Colonic mucosa (tissue), 4 donors: ENCODE measurements at regions of chr9 and their contacts with region 1.

Region 1: DNA sequence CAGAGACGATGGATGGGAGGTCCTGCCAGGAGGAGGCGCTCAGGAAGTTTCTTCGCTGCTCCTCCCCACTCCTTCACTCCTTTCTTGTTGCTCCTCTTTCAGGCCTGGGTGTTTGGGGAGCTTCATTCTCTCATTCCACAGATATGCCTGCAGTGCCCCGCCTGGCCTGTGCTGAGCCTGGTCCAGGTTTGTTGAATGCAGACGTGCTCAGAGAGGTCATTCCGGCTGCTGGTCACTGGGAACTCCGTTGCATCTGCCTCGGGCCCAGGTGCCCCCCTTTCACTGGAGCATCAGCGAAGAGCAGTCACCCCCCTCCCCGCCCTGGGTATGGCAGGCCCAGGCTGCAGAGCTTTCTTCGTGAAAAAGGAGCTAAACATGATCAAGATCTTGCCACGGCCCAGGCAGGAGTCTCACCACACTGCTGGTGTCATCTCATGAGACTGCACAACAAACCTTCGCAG is 15.5 kb downstream of the SURF6 start:
- DNase-seq: no peak
- H3K4me3 ChIP-seq: no peak overlapping the region
- H3K27ac ChIP-seq: no peak overlapping the region
- H3K4me1 ChIP-seq: no peaks in the 10 kb centered on the region
- H3K27me3 ChIP-seq: no peaks in the 10 kb centered on the region
- CTCF ChIP-seq: no peak

Region 2: GRCh38 chr9:133238851-133239532 is 81.5 kb before region 1 on chr9:
- intact Hi-C with region 1: loop called (anchors 10 kb)
- DNase-seq: peak; percentile 88
- H3K4me3 ChIP-seq: peak overlapping the region; percentile 22
- H3K27ac ChIP-seq: peak overlapping the region; percentile 66
- H3K4me1 ChIP-seq: peaks cover 5% of the 10 kb centered on the region
- H3K27me3 ChIP-seq: no peaks in the 10 kb centered on the region
- CTCF ChIP-seq: peak; percentile 79